Prostate gland (tissue), 2 donors: ENCODE measurements at regions of chr20 and their contacts with region 1.

Region 1: DNA sequence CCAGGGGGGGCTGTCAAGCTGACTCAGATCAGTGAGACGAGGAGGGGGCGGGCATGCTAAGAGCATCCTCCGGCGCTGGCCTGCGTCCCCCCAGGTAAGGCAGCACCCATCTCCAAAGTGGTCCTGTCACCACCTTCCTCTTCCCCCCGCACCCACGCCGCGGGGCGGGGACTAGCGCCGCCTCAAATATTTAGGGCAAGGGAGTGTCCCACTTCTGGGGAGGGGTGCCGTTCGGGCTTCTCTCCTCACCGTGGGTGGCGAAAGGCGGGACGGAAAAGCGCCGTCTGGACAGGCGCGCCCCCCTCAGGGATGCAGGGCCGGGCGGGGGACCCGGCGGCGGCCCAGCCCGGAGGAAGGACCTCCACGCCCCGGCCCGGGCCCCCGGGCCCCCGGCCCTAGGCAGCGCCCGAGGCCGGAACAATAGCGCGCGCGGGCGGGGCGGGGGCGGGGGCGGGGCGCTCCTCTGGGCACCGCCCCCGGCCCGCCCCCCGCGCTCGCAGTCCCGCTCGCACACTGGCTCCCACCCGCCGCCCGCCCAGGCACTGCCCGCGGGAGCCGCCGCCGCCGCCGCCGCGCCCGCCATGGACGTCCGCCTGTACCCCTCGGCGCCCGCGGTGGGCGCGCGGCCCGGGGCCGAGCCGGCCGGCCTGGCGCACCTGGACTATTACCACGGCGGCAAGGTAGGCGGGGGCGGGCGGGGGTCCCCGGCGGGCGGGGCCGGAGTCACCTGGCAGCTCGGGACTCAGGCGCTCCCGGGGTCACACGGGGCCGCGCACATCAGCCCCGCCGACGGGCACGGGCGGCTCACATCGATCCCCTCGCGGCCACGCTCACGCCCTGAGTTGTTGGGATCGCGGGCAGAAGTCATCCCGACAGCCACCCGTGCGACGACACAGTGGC is at the start of gene TOX2:
- DNase-seq: no peak
- H3K4me3 ChIP-seq: peak within 1 kb of the TSS; percentile 42 to 45
- H3K27ac ChIP-seq: peak within 1 kb of the TSS; percentile 51 to 67
- H3K4me1 ChIP-seq: no peaks in the 10 kb centered on the region
- H3K27me3 ChIP-seq: peaks cover 11% of the 10 kb centered on the region
- CTCF ChIP-seq: no peak
- POLR2A ChIP-seq: no peak
- total RNA-seq, gene TOX2: 8.8 to 52.8 TPM

Region 2: GRCh38 chr20:43749734-43750294 is 164.7 kb before region 1 on chr20:
- intact Hi-C with region 1: loop called (anchors 10 kb)
- DNase-seq: peak; percentile 49
- H3K4me3 ChIP-seq: no peak overlapping the region
- H3K27ac ChIP-seq: no peak overlapping the region
- H3K4me1 ChIP-seq: no peaks in the 10 kb centered on the region
- H3K27me3 ChIP-seq: peaks cover 6% of the 10 kb centered on the region
- CTCF ChIP-seq: peak; percentile 96 to 100 (median 98)
- POLR2A ChIP-seq: no peak

Region 3: DNA sequence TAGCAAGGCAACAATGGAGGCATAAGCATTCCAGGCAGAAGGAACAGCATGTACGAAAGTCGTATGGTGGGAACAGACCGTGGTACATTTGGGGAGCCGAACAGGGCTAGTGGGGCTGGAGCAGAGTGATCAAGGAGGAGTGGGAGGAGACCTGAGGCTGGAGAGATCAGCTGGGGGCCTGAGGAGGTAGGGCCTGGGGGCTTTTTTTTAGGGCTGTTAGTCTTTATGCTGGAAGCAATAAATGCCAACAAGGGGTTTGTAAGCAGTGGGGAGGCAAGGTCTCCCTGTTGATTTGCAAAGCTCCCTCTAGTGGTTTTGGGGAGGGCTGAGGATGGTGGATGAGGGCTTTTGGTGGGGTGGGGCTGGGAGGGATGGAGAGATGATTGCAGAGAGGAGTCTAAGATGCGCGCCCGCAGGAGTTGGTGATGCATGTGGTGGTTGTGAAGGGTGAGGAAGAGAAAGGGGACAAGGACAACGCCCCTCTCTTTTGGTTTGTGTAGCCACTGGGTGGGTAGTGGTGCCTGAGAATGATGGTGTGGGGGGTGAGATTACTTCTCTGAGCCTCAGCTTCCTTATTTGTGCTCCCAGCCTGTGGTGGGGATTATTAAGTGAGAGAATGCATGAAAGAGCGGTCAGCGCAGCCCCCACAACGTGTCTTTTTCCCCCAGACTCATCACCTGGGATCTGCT is 74.0 kb before region 1 on chr20:
- intact Hi-C with region 1: loop called (anchors 5 kb)
- DNase-seq: no peak
- H3K4me3 ChIP-seq: no peak overlapping the region
- H3K27ac ChIP-seq: no peak overlapping the region
- H3K4me1 ChIP-seq: no peaks in the 10 kb centered on the region
- H3K27me3 ChIP-seq: peaks cover 5% of the 10 kb centered on the region
- CTCF ChIP-seq: no peak
- POLR2A ChIP-seq: no peak

Region 4: GRCh38 chr20:44069203-44070011 is 154.8 kb after region 1 on chr20:
- intact Hi-C with region 1: loop called (anchors 10 kb)
- DNase-seq: no peak
- H3K4me3 ChIP-seq: no peak overlapping the region
- H3K27ac ChIP-seq: no peak overlapping the region
- H3K4me1 ChIP-seq: no peaks in the 10 kb centered on the region
- H3K27me3 ChIP-seq: no peaks in the 10 kb centered on the region
- CTCF ChIP-seq: no peak
- POLR2A ChIP-seq: no peak

Region 5: GRCh38 chr20:44196271-44196670 is 281.7 kb after region 1 on chr20:
- intact Hi-C with region 1: loop called (anchors 10 kb)
- DNase-seq: no peak
- H3K4me3 ChIP-seq: no peak overlapping the region
- H3K27ac ChIP-seq: no peak overlapping the region
- H3K4me1 ChIP-seq: no peaks in the 10 kb centered on the region
- H3K27me3 ChIP-seq: no peaks in the 10 kb centered on the region
- CTCF ChIP-seq: no peak
- POLR2A ChIP-seq: no peak